Calu3 (cell line): ENCODE measurements at regions of chr1 and their contacts with region 1.

Region 1: DNA sequence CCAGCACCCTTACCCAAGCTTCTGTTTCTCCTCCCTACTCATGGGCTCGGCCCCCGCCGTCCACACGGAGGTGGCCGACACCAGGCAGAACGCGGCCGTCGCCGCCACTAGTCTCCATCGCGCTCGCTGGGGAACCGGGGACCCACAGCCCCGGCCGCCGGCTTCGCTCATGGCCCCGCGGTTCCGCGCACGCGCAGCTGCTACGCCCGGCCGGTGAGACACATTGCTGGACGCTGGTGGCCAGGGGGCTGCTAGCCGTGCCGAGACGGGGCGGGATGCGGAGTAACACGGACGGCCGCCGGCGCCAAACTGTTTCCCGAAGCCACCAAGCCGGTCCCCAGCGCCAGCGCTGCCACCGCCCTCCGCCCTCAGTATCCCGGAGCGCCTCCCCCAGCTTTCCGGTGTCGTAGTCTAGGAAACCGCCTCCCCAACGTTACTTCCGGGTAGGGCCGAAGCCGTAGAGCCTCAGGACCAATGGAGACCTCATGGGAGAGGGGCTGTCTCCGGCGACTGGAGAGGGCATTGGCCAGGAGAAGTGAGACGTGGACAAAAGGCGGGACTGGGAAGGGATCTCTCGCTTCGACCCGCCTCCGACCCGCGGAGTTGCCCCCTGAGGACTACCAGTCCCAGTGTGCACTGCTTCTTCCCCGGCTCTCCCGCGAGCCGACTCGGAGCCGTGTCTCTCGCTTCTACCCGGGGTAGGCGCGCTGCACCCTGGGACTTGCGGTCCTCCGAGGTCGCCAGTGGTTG is at the start of gene EDEM3:
- DNase-seq: peak; percentile 99
- H3K4me3 Mint-ChIP-seq: peak within 1 kb of the TSS; percentile 100
- H3K27ac Mint-ChIP-seq: peak within 1 kb of the TSS; percentile 73
- H3K4me1 Mint-ChIP-seq: peaks cover 13% of the 10 kb centered on the region
- H3K27me3 Mint-ChIP-seq: no peaks in the 10 kb centered on the region
- CTCF ChIP-seq: no peak
- total RNA-seq, gene EDEM3: 41.9 and 44.5 TPM in 2 replicates

Region 2: DNA sequence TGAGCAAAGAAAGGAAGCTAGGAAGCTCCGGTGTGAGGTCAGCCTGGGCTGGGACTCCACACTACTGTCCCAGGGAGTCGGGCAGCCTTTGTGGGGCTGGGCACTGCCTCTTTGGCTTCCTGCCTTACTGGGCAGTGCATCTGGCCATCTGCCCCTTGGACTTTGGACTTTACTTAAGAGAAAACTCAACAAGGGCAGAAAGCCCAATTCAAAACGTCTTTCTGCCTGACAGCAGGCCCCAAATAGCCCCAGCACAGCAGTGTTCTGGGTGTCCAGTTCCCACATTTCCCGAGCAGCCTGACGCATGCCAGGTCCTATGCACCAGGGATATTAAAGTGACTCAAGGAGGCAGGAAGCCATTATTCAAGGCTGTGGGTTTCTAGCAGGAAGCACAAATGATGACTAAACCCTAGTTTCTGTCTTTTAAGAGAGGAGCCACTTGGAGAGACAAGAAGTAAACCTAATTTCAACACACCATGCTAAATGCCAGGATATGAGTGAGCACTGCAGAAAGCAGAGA is 37.9 kb after region 1 on chr1:
- CTCF ChIA-PET with region 1: no interaction called
- intact Hi-C with region 1: loop called (anchors 2 kb)
- DNase-seq: peak; percentile 71
- H3K4me3 Mint-ChIP-seq: peak overlapping the region; percentile 38
- H3K27ac Mint-ChIP-seq: peak overlapping the region; percentile 86
- H3K4me1 Mint-ChIP-seq: peaks cover 41% of the 10 kb centered on the region
- H3K27me3 Mint-ChIP-seq: no peaks in the 10 kb centered on the region
- CTCF ChIP-seq: no peak

Region 3: DNA sequence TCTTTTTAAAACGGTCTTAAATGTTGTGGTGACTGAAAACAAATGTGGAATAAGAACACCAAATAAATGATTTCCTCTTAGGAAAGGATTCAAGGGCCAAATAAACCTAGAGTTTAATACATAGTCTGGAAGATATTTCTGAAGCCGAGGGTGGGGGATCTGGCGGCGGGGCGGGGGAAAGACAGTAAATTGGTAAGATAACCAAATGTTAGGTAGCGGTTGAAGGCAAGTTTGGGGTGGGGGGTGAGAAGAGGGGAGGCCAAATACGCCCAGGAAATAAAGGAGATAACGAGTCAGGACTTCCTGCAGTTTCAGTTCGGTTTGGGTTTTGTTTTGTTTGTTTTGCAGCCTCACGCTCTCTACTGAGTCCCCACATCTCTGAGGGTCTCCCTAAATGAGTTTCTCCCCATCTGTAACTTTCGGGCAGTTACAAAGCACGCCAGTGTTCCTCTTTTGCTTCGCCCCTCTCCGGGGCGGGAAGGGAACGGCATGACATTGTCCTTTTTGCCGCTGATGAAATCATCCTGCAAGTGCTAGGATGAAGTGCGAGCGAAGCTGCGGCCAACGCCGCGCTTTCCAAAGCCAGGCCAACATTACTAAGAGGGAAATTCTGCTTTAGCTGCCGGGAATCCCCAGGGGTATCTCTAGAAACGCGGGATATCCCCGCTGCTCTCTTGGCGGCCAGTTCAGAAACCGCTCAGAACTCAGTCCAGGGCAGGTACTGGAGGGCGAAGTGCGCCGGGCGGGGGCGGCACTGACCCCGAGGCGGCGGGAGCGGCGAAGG is 218.8 kb after region 1 on chr1:
- CTCF ChIA-PET with region 1: no interaction called
- intact Hi-C with region 1: loop called (anchors 2 kb)
- DNase-seq: peak; percentile 53
- H3K4me3 Mint-ChIP-seq: peak overlapping the region; percentile 88
- H3K27ac Mint-ChIP-seq: peak overlapping the region; percentile 96
- H3K4me1 Mint-ChIP-seq: peaks cover 18% of the 10 kb centered on the region
- H3K27me3 Mint-ChIP-seq: no peaks in the 10 kb centered on the region
- CTCF ChIP-seq: no peak